IMR-90 (cell line): ENCODE measurements at regions of chr7 and their contacts with region 1.

Region 1: DNA sequence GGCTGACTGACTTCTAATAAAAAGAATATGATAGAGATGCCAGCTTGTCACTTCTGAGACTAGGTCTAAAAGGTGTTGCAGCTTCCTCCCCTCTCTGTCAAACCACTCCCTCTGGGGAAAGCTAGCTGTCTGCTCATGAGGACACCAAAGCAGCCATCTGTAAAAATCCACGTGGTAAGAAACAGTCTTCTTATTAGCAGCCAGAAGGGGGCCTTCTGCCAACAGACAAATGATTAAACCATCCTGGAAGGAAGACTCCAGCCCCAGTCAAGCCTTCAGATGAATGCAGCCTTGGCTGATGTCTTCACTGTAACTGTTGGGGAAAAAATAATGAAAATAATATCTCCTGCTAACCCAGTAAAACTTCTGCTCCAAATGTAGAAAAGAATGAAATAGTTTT is 41.9 kb upstream of the DAGLB start:
- DNase-seq: no peak
- ATAC-seq: no peak
- H3K4me3 ChIP-seq: no peak overlapping the region
- H3K27ac ChIP-seq: no peak overlapping the region
- H3K4me1 ChIP-seq: no peaks in the 10 kb centered on the region
- H3K27me3 ChIP-seq: peaks cover 13% of the 10 kb centered on the region
- CTCF ChIP-seq: no peak
- POLR2A ChIP-seq: no peak
- RAD21 ChIP-seq: no peak

Region 2: DNA sequence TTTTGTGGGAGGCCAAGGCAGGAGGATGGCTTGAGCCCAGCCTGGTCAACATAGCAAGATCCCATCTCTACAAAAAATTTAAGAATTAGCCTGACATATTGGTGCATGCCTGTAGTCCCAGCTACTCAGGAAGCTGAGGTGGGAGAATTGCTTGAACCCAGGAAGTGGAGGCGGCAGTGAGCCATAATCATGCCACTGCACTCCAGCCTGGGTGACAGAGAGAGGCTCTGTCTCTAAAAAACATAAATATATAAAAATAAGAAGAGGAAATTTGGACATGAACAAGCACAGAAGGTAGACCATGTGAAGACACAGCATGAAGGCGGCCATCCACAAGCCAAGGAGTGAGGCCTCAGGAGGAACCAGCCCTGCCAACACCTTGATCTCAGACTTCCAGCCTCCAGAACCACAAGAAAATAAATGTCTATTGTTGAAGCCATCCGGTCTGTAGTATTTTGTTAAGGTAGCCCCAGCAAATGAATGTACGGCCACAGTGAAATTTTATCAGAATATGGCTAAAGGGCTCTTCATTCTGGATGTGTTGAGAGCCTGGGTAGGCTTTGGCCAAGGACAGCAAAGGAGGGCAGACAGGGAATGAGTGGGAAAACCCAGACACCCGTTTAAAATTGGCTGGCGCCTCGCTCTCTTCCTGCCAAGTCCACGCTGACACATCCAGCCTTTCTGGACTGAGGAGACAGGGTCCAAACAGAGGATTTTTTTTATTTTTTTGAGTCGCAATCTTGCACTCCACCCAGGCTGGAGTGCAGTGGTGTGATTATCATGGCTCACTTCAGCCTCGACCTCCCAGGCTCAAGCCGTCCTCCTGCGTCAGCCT is 74.5 kb after region 1 on chr7:
- CTCF ChIA-PET with region 1: no interaction called
- POLR2A ChIA-PET with region 1: no interaction called
- dilution Hi-C with region 1: no loop called
- in situ Hi-C with region 1: no loop called
- intact Hi-C with region 1: loop called (anchors 2 kb)
- DNase-seq: no peak
- ATAC-seq: no peak
- H3K4me3 ChIP-seq: no peak overlapping the region
- H3K27ac ChIP-seq: no peak overlapping the region
- H3K4me1 ChIP-seq: no peaks in the 10 kb centered on the region
- H3K27me3 ChIP-seq: peaks cover 2% of the 10 kb centered on the region; the same call in 1 of the 2 replicates
- CTCF ChIP-seq: no peak
- POLR2A ChIP-seq: no peak
- RAD21 ChIP-seq: no peak